Naive thymus-derived CD4-positive, alpha-beta T cell (primary cell): ENCODE measurements at regions of chr2 and their contacts with region 1.

Region 1: GRCh38 chr2:38581193-38582147 is 21.3 kb downstream of the HNRNPLL start:
- DNase-seq: peak in 7 of 9 donors; percentile 64 to 83 (median 77)
- ATAC-seq: peak; percentile 94
- H3K4me3 ChIP-seq: no peak overlapping the region
- H3K4me3 Mint-ChIP-seq: no peak overlapping the region
- H3K27ac ChIP-seq: no peak overlapping the region
- H3K27ac Mint-ChIP-seq: no peak overlapping the region
- H3K4me1 ChIP-seq: peaks cover 0 to 3% of the 10 kb centered on the region in 2 donors
- H3K4me1 Mint-ChIP-seq: peaks cover 0 to 23% (median 0%) of the 10 kb centered on the region in 7 donors
- H3K27me3 ChIP-seq: no peaks in the 10 kb centered on the region
- H3K27me3 Mint-ChIP-seq: no peaks in the 10 kb centered on the region

Region 2: DNA sequence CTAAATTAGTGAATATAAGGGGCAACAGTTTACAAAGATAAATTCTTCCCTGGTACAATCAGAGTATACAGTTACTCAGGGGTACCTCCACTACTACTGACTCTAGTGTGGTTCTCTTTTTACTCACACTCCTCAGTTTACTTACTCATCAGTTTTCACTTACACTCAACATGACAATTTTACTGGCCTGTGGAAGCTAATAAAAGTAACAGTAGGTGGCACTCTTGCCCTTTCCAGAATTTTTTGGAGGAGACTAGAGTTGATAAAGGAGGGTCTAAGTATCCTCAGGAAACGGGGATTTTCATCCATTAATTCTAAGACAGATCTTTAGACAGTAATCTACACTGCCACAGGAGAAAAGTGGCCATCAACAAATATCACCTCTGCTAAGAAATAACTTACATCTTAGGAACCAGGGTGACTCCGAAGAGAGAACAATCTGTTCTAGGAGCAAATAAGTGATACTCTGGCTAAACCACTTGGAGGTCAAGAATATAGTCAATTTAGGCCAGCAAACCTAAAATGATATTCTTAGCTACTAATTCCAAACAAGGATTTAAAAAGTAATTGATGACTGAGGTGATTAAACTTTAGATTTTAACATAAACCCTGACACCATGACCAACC is 265.6 kb before region 1 on chr2:
- CTCF ChIA-PET with region 1: no interaction called
- POLR2A ChIA-PET with region 1: no interaction called
- intact Hi-C with region 1: loop called in 1 of 2 experiments (anchors 5 kb)
- DNase-seq: peak in 7 of 9 donors; percentile 14 to 50 (median 33)
- ATAC-seq: peak; percentile 66
- H3K4me3 ChIP-seq: no peak overlapping the region
- H3K4me3 Mint-ChIP-seq: no peak overlapping the region
- H3K27ac ChIP-seq: no peak overlapping the region
- H3K27ac Mint-ChIP-seq: no peak overlapping the region
- H3K4me1 ChIP-seq: no peaks in the 10 kb centered on the region
- H3K4me1 Mint-ChIP-seq: peaks cover 0 to 6% (median 0%) of the 10 kb centered on the region in 7 donors
- H3K27me3 ChIP-seq: no peaks in the 10 kb centered on the region
- H3K27me3 Mint-ChIP-seq: no peaks in the 10 kb centered on the region

Region 3: GRCh38 chr2:38682008-38682575 is 100.6 kb after region 1 on chr2:
- CTCF ChIA-PET with region 1: interaction called, 10 read pairs
- POLR2A ChIA-PET with region 1: no interaction called
- intact Hi-C with region 1: loop called in 1 of 2 experiments (anchors 5 kb)
- DNase-seq: peak in 1 of 9 donors; percentile 18
- ATAC-seq: peak; percentile 83
- H3K4me3 ChIP-seq: peak overlapping the region; percentile 17
- H3K4me3 Mint-ChIP-seq: peak overlapping the region in 7 of 10 donors; percentile 12 to 55 (median 27)
- H3K27ac ChIP-seq: peak overlapping the region; percentile 4
- H3K27ac Mint-ChIP-seq: peak overlapping the region; percentile 11 to 82 (median 59)
- H3K4me1 ChIP-seq: peaks cover 14 to 51% of the 10 kb centered on the region in 2 donors
- H3K4me1 Mint-ChIP-seq: peaks cover 8 to 50% (median 32%) of the 10 kb centered on the region in 7 donors
- H3K27me3 ChIP-seq: no peaks in the 10 kb centered on the region
- H3K27me3 Mint-ChIP-seq: no peaks in the 10 kb centered on the region

Region 4: DNA sequence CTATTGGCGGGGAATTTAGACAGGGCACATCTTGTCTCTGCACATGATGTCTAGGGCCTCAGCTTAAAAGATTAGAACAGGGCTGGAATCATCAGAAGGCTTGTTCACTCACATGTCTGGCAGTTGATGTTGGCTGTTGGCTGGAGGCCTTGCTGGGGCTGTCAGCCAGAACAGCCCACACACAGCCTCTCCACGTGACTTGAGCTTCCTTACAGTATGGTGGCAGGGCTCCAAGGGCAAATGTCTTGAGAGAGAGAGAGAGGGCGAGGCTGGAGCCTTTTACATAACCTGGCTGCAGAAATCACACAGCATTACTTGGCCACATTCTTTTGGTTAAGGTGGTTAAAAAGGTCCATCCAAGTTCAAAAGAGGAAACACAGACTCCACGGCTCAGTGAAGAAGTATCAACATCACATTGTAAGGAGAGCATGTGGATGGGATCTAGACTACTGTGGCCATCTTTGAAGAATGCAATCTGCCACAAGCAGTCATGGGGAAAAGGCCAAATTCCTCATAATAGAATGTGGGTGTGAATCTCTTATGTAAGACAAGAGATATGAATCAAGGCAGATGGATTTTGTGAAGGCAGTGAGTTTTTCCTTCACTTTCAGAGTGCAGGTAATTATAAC is 139.3 kb after region 1 on chr2:
- CTCF ChIA-PET with region 1: interaction called, 127 read pairs
- POLR2A ChIA-PET with region 1: no interaction called
- intact Hi-C with region 1: no loop called
- DNase-seq: no peak
- ATAC-seq: no peak
- H3K4me3 ChIP-seq: no peak overlapping the region
- H3K4me3 Mint-ChIP-seq: peak overlapping the region in 2 of 10 donors; percentile 28 to 29
- H3K27ac ChIP-seq: no peak overlapping the region
- H3K27ac Mint-ChIP-seq: peak overlapping the region in 4 of 9 donors; percentile 18 to 67 (median 34)
- H3K4me1 ChIP-seq: peaks cover 7 to 27% of the 10 kb centered on the region in 2 donors
- H3K4me1 Mint-ChIP-seq: peaks cover 11 to 51% (median 29%) of the 10 kb centered on the region in 7 donors
- H3K27me3 ChIP-seq: no peaks in the 10 kb centered on the region
- H3K27me3 Mint-ChIP-seq: no peaks in the 10 kb centered on the region

Region 5: GRCh38 chr2:38740851-38741731 is 159.6 kb after region 1 on chr2:
- CTCF ChIA-PET with region 1: interaction called, 32 read pairs
- POLR2A ChIA-PET with region 1: interaction called, 7 read pairs
- intact Hi-C with region 1: loop called (anchors 1 kb)
- DNase-seq: peak in 7 of 9 donors; percentile 31 to 59 (median 53)
- ATAC-seq: peak; percentile 56
- H3K4me3 ChIP-seq: no peak overlapping the region
- H3K4me3 Mint-ChIP-seq: no peak overlapping the region
- H3K27ac ChIP-seq: no peak overlapping the region
- H3K27ac Mint-ChIP-seq: peak overlapping the region in 8 of 9 donors; percentile 3 to 83 (median 70)
- H3K4me1 ChIP-seq: peaks cover 10 to 11% of the 10 kb centered on the region in 2 donors
- H3K4me1 Mint-ChIP-seq: peaks cover 20 to 57% (median 36%) of the 10 kb centered on the region in 7 donors
- H3K27me3 ChIP-seq: no peaks in the 10 kb centered on the region
- H3K27me3 Mint-ChIP-seq: no peaks in the 10 kb centered on the region

Region 6: DNA sequence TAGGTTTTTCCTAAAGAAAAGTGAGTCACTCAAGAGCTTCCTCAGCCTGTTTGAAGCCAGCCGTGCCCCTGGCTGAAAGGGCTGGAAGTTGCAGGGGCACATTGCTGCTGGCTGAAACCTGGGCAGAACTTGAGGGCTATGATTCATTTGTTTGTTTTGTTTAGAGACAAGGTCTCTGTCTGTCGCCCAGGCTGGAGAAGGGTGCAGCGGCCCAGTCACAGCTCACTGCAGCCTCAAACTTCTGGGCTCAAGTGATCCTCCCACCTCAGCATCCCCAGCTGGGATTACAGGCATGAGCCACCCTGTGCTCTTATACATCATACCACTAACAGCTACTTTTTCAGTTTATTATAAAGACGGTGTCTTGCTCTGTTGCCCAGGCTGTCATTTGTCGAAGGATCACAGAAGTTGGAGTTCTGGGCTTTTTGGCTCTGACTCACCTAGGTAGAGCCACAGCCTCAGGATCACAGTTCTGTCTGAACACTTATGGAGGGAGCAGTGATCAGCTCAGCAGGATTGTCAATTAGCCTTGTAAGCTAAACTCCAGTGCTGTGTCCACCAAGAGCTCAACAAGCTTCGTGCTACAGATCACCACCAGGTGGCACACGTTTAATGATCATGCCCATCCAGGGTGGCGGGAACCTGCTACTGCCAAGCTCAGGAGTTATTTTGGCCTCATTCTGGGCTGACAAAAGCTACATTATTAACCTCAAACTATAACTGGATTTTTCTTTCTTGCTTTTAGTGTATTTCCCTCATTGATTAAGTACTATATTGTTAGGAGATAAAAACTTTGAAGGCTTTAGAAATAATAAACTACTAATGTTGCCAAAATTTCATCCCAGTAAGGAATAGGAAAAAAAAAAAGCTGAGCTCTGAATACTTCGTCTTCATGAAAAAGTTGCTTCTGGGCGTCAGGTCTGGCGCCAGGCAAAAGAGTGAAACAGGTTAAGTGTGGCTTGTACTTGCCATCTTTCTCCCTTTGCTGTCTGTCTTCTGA is 366.1 kb after region 1 on chr2:
- CTCF ChIA-PET with region 1: no interaction called
- POLR2A ChIA-PET with region 1: no interaction called
- intact Hi-C with region 1: loop called in 1 of 2 experiments (anchors 1 kb)
- DNase-seq: peak; percentile 8 to 57 (median 35)
- ATAC-seq: peak; percentile 67
- H3K4me3 ChIP-seq: no peak overlapping the region
- H3K4me3 Mint-ChIP-seq: no peak overlapping the region
- H3K27ac ChIP-seq: no peak overlapping the region
- H3K27ac Mint-ChIP-seq: peak overlapping the region in 1 of 9 donors; percentile 13
- H3K4me1 ChIP-seq: no peaks in the 10 kb centered on the region
- H3K4me1 Mint-ChIP-seq: peaks cover 0 to 3% (median 0%) of the 10 kb centered on the region in 7 donors
- H3K27me3 ChIP-seq: no peaks in the 10 kb centered on the region
- H3K27me3 Mint-ChIP-seq: peaks cover 0 to 6% (median 0%) of the 10 kb centered on the region in 5 donors